ENCODE measurements at regions of chr10 and their contacts with region 1.

Region 1: DNA sequence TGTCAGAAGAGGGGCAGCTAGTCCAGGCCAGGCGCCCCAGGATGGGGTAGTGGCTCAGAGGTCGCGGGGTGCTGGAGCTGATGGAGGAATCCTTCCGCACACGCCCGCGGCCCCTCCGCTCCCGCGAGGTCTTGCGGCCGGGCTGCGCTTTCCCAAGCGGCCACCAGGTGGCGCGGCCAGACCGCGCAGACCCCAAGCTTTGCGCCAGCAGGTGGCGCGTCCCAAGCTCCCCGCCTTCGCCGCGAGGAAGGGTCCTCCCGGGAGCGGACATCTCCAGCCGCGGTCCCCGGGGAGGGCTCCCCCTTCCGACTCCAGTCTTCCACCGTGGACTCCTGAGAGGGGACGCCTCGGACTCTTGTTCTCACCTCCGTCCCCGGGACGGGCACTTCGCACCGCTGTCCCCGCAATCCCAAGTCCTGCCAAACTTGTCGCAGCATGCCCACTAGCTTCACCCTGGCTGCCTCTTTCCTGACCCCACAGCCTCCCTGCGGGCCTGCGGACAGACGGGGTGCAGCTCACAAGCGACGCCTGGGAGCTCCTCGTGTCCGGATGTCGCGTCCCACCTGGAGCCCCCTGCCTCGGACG is 19.4 kb downstream of the KCNK18 start:
- DNase-seq: peak; percentile 33 to 81 (median 60)
- H3K4me3 ChIP-seq: peak overlapping the region; percentile 41 to 73 (median 59)
- H3K27ac ChIP-seq: peak overlapping the region in 1 of 59 donors; percentile 36
- H3K27me3 ChIP-seq: peaks cover 0 to 46% (median 15%) of the 10 kb centered on the region in 45 donors
- CTCF ChIP-seq: peak in 55 of 56 donors; percentile 80 to 100 (median 100)

Region 2: DNA sequence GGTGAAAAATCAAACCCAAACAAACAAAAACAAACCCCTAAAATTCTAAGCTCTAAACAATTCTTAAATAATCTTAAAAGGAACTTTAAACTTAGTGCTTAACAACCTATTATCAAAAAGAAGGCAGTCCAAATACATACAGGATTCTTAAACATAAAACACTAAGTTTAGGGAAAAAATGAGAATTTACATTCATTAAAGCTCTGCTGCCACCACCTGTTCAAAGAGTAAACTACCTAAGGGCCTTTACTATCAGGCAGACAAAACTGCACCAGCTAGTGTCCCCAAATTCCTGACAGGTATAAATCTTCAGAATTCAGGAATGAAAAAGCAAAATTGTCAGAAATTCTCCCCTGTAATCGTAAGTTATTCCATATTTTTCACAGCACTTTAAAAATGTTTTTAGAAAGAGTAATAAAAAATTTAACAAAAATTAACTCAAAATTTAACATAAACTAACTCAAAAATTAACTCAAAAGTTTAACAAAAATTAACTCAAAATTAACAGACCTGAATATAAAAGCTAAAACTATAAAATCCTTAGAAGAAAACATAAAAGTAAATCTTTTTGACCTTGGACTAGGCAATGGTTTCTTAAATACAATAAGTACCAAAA is 103.5 kb after region 1 on chr10:
- intact Hi-C with region 1: loop called (anchors 2 kb)
- DNase-seq: peak in 1 of 10 donors; percentile 12
- H3K4me3 ChIP-seq: no peak overlapping the region
- H3K27ac ChIP-seq: no peak overlapping the region
- H3K27me3 ChIP-seq: no peaks in the 10 kb centered on the region
- CTCF ChIP-seq: peak; percentile 32 to 80 (median 64)

Region 3: GRCh38 chr10:117375360-117376178 is 158.9 kb after region 1 on chr10 and contains the start of gene PDZD8:
- intact Hi-C with region 1: loop called in 1 of 2 experiments (anchors 2 kb)
- DNase-seq: peak; percentile 86 to 97 (median 92)
- H3K4me3 ChIP-seq: peak within 1 kb of the TSS; percentile 64 to 99 (median 91)
- H3K27ac ChIP-seq: peak within 1 kb of the TSS; percentile 55 to 97 (median 88)
- H3K27me3 ChIP-seq: peaks cover 0 to 5% (median 0%) of the 10 kb centered on the region in 45 donors
- CTCF ChIP-seq: peak in 32 of 56 donors; percentile 5 to 67 (median 20)
- total RNA-seq, gene PDZD8: 38.7 to 70.2 (median 47.8) TPM

Region 4: GRCh38 chr10:117442944-117443685 is 226.4 kb after region 1 on chr10:
- intact Hi-C with region 1: loop called in 1 of 2 experiments (anchors 10 kb)
- DNase-seq: peak; percentile 54 to 81 (median 74)
- H3K4me3 ChIP-seq: peak overlapping the region in 20 of 59 donors; percentile 13 to 44 (median 32)
- H3K27ac ChIP-seq: peak overlapping the region in 6 of 59 donors; percentile 6 to 48 (median 29)
- H3K27me3 ChIP-seq: peaks cover 0 to 8% (median 0%) of the 10 kb centered on the region in 45 donors
- CTCF ChIP-seq: peak; percentile 74 to 97 (median 89)

Measured in dorsolateral prefrontal cortex (tissue), 120 donors.